Dorsolateral prefrontal cortex (tissue), 120 donors: ENCODE measurements at regions of chr16 and their contacts with region 1.

Region 1: GRCh38 chr16:83826146-83826913 is 18.6 kb downstream of the HSBP1 start:
- DNase-seq: peak; percentile 63 to 91 (median 84)
- H3K4me3 ChIP-seq: peak overlapping the region in 3 of 59 donors; percentile 2 to 9 (median 2)
- H3K27ac ChIP-seq: peak overlapping the region in 7 of 59 donors; percentile 4 to 62 (median 38)
- H3K27me3 ChIP-seq: no peaks in the 10 kb centered on the region
- CTCF ChIP-seq: peak; percentile 79 to 99 (median 95)

Region 2: DNA sequence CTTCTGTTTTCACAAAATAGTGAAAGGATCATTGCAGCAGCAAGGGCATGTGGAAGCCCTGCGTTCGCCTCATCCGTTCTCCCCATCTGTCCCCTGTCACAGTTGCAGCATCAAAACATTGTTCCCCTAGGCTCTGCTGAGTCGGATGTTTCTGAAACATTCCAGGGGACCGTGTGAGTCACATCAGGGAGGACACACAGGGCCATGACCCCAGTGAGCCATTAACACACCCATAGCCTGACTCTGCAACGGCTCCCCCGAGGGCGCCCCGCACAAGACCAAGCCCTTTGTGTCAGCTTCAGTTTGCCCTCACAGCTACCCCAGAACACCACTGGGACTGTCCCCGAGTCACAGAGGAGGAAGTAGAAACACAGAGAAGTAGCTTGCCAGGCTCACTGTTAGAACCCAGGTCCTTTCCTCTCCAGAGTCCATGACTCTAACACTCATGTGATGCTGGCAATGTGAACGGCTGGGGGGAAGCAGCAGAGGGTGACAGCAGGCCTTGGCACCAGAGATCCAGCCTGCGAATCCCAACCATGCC is 81.8 kb before region 1 on chr16:
- intact Hi-C with region 1: loop called in 1 of 2 experiments (anchors 5 kb)
- DNase-seq: peak in 5 of 10 donors; percentile 24 to 63 (median 50)
- H3K4me3 ChIP-seq: peak overlapping the region in 3 of 59 donors; percentile 3 to 30 (median 28)
- H3K27ac ChIP-seq: peak overlapping the region in 58 of 59 donors; percentile 18 to 95 (median 84)
- H3K27me3 ChIP-seq: peaks cover 0 to 5% (median 0%) of the 10 kb centered on the region in 45 donors
- CTCF ChIP-seq: peak in 2 of 56 donors; percentile 9 to 25

Region 3: GRCh38 chr16:83878838-83879237 is 52.5 kb after region 1 on chr16:
- intact Hi-C with region 1: loop called (anchors 5 kb)
- DNase-seq: no peak
- H3K4me3 ChIP-seq: no peak overlapping the region
- H3K27ac ChIP-seq: no peak overlapping the region
- H3K27me3 ChIP-seq: no peaks in the 10 kb centered on the region
- CTCF ChIP-seq: peak in 55 of 56 donors; percentile 26 to 77 (median 60)

Region 4: GRCh38 chr16:83898463-83899271 is 72.3 kb after region 1 on chr16 and contains the start of gene MLYCD:
- intact Hi-C with region 1: loop called in 1 of 2 experiments (anchors 5 kb)
- DNase-seq: peak; percentile 67 to 91 (median 80)
- H3K4me3 ChIP-seq: peak within 1 kb of the TSS; percentile 62 to 96 (median 86)
- H3K27ac ChIP-seq: peak within 1 kb of the TSS; percentile 65 to 98 (median 92)
- H3K27me3 ChIP-seq: no peaks in the 10 kb centered on the region
- CTCF ChIP-seq: peak in 11 of 56 donors; percentile 4 to 42 (median 12)
- total RNA-seq, gene MLYCD: 5.7 to 18.1 (median 9.9) TPM

Region 5: DNA sequence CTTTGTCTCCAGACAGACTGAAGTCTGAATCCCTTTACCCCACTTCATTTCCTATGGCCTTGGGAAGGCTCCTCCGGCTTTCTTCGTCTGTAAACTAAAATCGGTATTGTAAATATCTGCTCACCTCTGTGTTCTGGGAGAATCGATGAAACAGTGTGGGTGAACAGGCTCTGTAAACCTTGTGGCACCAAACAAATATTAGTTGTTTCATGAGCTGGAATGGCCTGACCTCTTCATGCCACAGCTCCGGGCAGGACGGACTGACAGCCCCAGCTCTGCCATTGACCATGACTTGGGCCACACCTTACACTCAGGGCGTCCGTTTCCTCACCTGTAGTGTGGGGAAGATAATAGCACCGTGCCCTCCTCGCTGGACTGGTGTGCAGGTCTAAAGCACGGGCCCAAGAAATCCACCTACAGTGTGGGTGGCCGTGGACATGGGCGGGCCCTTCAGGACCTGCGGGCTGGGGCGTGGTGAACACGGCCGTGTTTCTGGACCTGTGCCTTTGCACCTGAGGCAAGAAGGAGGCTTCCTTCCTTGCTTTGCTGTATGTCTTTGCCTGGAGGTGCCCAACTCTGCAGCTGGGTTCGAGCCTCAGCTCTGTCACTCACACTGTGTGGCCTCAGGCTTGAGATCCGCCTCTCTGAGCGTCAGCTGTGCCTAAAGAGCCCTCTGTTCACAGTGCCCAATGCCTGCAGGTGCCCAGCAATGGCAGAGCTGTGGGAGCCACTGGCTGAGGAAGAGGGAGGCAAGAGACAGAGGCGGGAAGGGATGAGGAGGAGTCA is 120.6 kb after region 1 on chr16:
- intact Hi-C with region 1: loop called in 1 of 2 experiments (anchors 5 kb)
- DNase-seq: no peak
- H3K4me3 ChIP-seq: no peak overlapping the region
- H3K27ac ChIP-seq: no peak overlapping the region
- H3K27me3 ChIP-seq: no peaks in the 10 kb centered on the region
- CTCF ChIP-seq: no peak

Region 6: GRCh38 chr16:84062734-84063640 is 236.7 kb after region 1 on chr16:
- intact Hi-C with region 1: loop called in 1 of 2 experiments (anchors 5 kb)
- DNase-seq: peak; percentile 69 to 84 (median 82)
- H3K4me3 ChIP-seq: no peak overlapping the region
- H3K27ac ChIP-seq: peak overlapping the region in 39 of 59 donors; percentile 2 to 68 (median 27)
- H3K27me3 ChIP-seq: no peaks in the 10 kb centered on the region
- CTCF ChIP-seq: peak; percentile 78 to 98 (median 89)